ENCODE measurements at regions of chr6 and their contacts with region 1.

Region 1: GRCh38 chr6:154352898-154353585 is 3.6 kb downstream of the IPCEF1 start:
- DNase-seq: peak; percentile 78
- ATAC-seq: peak; percentile 85
- H3K4me3 Mint-ChIP-seq: no peak overlapping the region
- H3K27ac Mint-ChIP-seq: no peak overlapping the region
- H3K4me1 Mint-ChIP-seq: peaks cover 29% of the 10 kb centered on the region
- H3K27me3 Mint-ChIP-seq: peaks cover 35% of the 10 kb centered on the region

Region 2: DNA sequence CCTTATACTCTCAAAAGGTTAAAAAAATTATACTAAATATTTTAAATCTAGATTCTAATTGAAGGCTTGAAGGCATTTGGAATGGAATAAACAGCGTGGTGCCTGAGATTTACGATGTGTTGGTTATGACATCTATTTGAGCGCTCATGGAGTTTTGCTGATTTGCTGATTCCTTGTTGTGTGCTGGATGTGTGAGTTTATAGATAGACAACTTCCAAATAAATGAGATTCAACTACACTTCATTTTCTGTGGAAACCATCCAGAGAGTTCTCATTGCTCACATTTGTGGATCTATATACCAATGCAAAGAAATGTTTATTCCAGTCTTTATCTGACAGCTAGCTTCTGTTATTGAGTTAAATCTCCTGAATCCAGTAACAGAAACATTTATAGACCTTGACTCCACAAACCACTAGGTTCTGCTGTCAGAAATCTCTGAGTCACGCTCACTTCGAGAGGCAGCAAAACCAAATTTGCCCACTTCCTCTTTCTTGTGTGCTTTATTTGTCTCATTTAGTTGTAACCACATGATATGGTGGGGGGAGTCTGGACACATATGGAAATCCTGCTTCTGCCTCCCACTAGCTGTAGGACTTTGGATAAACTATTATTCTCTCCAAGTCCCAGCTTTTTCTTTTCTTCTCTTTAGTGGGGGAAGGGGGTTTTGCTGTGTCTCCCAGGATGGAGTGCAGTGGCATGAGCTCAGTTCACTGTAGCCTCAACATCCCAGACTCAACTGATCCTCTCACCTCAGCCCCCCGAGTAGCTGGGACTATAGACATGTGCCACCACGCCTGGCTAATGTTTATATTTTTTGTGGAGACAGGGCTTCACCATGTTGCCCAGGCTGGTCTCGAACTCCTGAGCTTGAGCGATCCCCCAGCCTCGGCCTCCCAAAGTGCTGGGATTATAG is 50.9 kb before region 1 on chr6:
- CTCF ChIA-PET with region 1: no interaction called
- POLR2A ChIA-PET with region 1: no interaction called
- intact Hi-C with region 1: loop called (anchors 2 to 5 kb)
- DNase-seq: peak; percentile 47
- ATAC-seq: peak; percentile 91
- H3K4me3 Mint-ChIP-seq: no peak overlapping the region
- H3K27ac Mint-ChIP-seq: no peak overlapping the region
- H3K4me1 Mint-ChIP-seq: peaks cover 13% of the 10 kb centered on the region
- H3K27me3 Mint-ChIP-seq: peaks cover 8% of the 10 kb centered on the region

Region 3: DNA sequence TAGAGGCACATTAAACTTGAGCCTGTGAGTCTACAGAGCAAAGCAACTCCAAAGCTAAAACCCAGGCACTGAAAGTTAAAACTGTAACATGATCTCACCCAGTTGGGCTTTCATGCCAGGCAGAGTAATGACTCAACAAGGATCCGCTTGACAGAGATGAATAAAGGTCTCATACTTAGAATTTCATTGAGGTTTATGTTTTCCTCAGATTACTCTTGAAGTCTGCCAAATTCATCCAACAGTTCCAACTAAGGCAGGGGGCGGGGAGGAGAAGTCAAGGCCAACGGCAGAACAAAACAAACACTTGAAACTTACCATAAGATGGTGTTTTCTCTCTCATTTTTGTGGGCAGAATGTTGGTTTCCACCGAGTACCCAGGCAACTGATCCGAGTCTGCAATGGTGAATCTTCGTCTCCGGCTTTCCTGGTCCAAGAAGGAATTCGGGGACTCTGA is 57.6 kb after region 1 on chr6:
- CTCF ChIA-PET with region 1: no interaction called
- POLR2A ChIA-PET with region 1: no interaction called
- intact Hi-C with region 1: loop called (anchors 1 to 2 kb)
- DNase-seq: peak; percentile 76
- ATAC-seq: peak; percentile 98
- H3K4me3 Mint-ChIP-seq: no peak overlapping the region
- H3K27ac Mint-ChIP-seq: peak overlapping the region; percentile 49
- H3K4me1 Mint-ChIP-seq: peaks cover 11% of the 10 kb centered on the region
- H3K27me3 Mint-ChIP-seq: peaks cover 14% of the 10 kb centered on the region